ENCODE measurements at regions of chr3 and their contacts with region 1.

Region 1: GRCh38 chr3:126743350-126743749 is 39.3 kb downstream of the CHCHD6 start:
- DNase-seq: no peak
- H3K4me3 ChIP-seq: no peak overlapping the region
- H3K27ac ChIP-seq: no peak overlapping the region
- H3K4me1 ChIP-seq: no peaks in the 10 kb centered on the region
- H3K27me3 ChIP-seq: no peaks in the 10 kb centered on the region
- CTCF ChIP-seq: no peak

Region 2: GRCh38 chr3:126284258-126284904 is 459.0 kb before region 1 on chr3:
- CTCF ChIA-PET with region 1: no interaction called
- dilution Hi-C with region 1: no loop called
- in situ Hi-C with region 1: no loop called
- intact Hi-C with region 1: no loop called
- DNase-seq: peak; percentile 92
- H3K4me3 ChIP-seq: peak overlapping the region in 2 of 3 experiments; percentile 33 to 38
- H3K27ac ChIP-seq: peak overlapping the region; percentile 92
- H3K4me1 ChIP-seq: peaks cover 30% of the 10 kb centered on the region
- H3K27me3 ChIP-seq: no peaks in the 10 kb centered on the region
- CTCF ChIP-seq: no peak

Region 3: GRCh38 chr3:126703512-126704462 is 39.6 kb before region 1 on chr3 and contains the start of gene CHCHD6:
- CTCF ChIA-PET with region 1: no interaction called
- dilution Hi-C with region 1: no loop called
- in situ Hi-C with region 1: no loop called
- intact Hi-C with region 1: no loop called
- DNase-seq: peak; percentile 93
- H3K4me3 ChIP-seq: peak within 1 kb of the TSS; percentile 80 to 87 (median 87)
- H3K27ac ChIP-seq: no peak within 1 kb of the TSS
- H3K4me1 ChIP-seq: peaks cover 11% of the 10 kb centered on the region
- H3K27me3 ChIP-seq: no peaks in the 10 kb centered on the region
- CTCF ChIP-seq: no peak
- total RNA-seq, gene CHCHD6: 16.5 to 30.8 TPM

Region 4: DNA sequence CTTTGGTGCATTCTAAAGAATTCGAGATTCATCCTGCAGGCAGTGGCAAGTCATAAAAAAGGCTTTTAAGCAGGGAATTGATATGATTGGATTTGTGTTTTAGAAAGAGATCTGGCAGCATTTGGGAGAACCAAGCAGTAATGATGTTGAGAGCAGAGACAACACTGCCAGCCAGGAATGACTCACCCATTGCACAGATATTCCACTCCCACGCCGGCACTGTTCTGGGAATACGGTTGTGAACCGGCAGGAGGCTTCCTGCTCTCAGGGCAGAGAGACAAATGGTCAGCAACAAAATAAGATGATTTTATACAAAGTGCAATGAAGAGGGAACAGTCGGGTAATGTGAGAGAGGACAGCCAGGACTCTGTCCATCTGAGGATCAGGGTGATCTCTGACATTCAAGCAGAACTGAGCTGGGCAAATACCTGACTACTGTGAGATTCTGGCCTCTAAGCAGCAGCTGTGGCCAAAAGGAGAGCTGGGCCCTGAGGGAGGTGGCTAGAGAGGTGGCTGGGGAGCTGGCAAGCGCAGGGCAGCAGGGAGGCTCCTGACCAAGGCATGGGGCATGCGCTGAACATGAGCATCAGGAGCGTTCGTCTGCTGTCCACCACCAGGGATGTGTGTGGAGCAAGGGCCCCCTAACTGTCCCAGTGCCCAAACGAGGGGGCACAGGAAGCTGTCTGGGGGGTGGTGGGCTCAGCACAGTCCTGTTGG is 183.5 kb after region 1 on chr3:
- CTCF ChIA-PET with region 1: no interaction called
- dilution Hi-C with region 1: no loop called
- in situ Hi-C with region 1: no loop called
- intact Hi-C with region 1: no loop called
- DNase-seq: peak; percentile 68
- H3K4me3 ChIP-seq: no peak overlapping the region
- H3K27ac ChIP-seq: no peak overlapping the region
- H3K4me1 ChIP-seq: peaks cover 21% of the 10 kb centered on the region
- H3K27me3 ChIP-seq: no peaks in the 10 kb centered on the region
- CTCF ChIP-seq: peak; percentile 35 to 47

Region 5: DNA sequence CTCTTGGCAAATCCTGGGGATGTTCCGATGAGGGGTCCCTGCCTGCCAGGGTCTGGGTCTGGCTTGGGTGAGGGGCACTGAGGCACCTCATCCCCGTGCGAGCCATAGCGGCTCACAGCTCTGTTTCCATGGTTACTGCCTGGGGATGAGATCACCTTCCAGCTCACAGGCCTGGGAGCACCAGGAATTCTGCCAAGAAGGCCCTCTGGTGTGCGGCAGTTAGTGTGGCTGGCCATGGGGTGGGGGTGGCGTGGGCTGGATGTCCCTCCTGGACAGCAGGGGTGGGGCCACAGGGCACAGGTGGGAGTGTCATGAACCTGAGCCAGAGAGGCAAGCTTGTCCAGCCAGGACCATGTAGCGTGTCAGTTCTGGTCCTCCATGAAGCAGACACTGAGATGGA is 427.5 kb after region 1 on chr3:
- CTCF ChIA-PET with region 1: interaction called, 14 read pairs
- dilution Hi-C with region 1: no loop called
- in situ Hi-C with region 1: no loop called
- intact Hi-C with region 1: no loop called
- DNase-seq: peak; percentile 16
- H3K4me3 ChIP-seq: no peak overlapping the region
- H3K27ac ChIP-seq: no peak overlapping the region
- H3K4me1 ChIP-seq: no peaks in the 10 kb centered on the region
- H3K27me3 ChIP-seq: no peaks in the 10 kb centered on the region
- CTCF ChIP-seq: no peak